B cell (primary cell): ENCODE measurements at regions of chr1 and their contacts with region 1.

Region 1: DNA sequence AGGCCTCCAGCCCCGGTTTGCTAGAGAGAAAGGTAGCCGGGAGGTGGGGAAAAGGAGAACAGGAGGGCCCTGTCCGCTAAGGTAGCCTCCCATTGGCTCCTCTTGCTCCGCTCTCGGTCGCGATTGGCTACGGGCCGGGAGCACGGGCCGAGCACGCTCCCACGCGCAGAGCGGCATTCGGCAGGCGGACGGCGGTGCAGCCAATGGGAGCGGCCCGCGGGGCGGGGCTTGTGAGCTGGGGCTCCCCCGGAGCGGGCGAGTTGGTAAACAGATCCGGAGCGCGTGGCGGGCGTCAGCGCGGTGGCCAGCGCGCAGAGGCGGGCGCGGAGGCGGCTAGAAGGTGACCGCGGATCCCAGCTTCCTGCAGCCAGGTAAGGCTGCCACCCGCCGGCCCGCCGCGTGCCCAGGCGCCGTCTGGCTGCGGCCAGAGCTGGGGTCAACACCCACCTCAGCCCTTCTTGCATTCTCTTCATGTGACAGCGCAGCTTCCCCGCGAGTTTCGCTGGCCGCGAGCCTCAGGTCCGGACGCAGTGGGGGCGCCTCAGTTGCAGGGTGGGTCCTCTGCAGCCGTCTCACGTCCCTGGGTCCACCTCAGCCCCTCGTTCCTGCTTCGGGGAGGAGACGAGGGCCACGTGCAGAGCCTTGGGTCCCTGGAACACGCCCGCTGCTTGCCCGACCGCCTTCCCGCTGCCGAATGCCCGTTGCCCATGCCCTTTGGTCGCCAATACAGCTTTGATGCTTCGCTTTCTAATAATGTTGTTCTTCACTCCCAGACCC is at the start of gene COQ8A:
- DNase-seq: peak; percentile 99
- ATAC-seq: peak; percentile 92
- H3K4me3 ChIP-seq: peak within 1 kb of the TSS; percentile 78 to 93 (median 90)
- H3K4me3 Mint-ChIP-seq: peak within 1 kb of the TSS; percentile 95
- H3K27ac ChIP-seq: peak within 1 kb of the TSS; percentile 86 to 94
- H3K27ac Mint-ChIP-seq: peak within 1 kb of the TSS; percentile 99
- H3K4me1 ChIP-seq: peaks cover 27 to 35% of the 10 kb centered on the region in 2 donors
- H3K4me1 Mint-ChIP-seq: peaks cover 60% of the 10 kb centered on the region
- H3K27me3 ChIP-seq: no peaks in the 10 kb centered on the region
- H3K27me3 Mint-ChIP-seq: no peaks in the 10 kb centered on the region
- CTCF ChIP-seq: no peak
- total RNA-seq, gene COQ8A: 48.7 and 58.2 TPM in 2 replicates

Region 2: GRCh38 chr1:226626577-226626956 is 313.6 kb before region 1 on chr1:
- CTCF ChIA-PET with region 1: no interaction called
- POLR2A ChIA-PET with region 1: no interaction called
- intact Hi-C with region 1: loop called (anchors 2 kb)
- DNase-seq: peak; percentile 85
- ATAC-seq: peak; percentile 97
- H3K4me3 ChIP-seq: peak overlapping the region in 4 of 5 experiments; percentile 9 to 46 (median 32)
- H3K4me3 Mint-ChIP-seq: peak overlapping the region; percentile 56
- H3K27ac ChIP-seq: no peak overlapping the region
- H3K27ac Mint-ChIP-seq: peak overlapping the region; percentile 21
- H3K4me1 ChIP-seq: peaks cover 20 to 21% of the 10 kb centered on the region in 2 donors
- H3K4me1 Mint-ChIP-seq: peaks cover 37% of the 10 kb centered on the region
- H3K27me3 ChIP-seq: no peaks in the 10 kb centered on the region
- H3K27me3 Mint-ChIP-seq: no peaks in the 10 kb centered on the region
- CTCF ChIP-seq: peak; percentile 95

Region 3: GRCh38 chr1:226870401-226871279 is 69.6 kb before region 1 on chr1 and contains the start of gene PSEN2:
- CTCF ChIA-PET with region 1: interaction called, 3 read pairs
- POLR2A ChIA-PET with region 1: interaction called, 4 read pairs
- intact Hi-C with region 1: loop called (anchors 1 kb)
- DNase-seq: peak; percentile 76
- ATAC-seq: peak; percentile 96
- H3K4me3 ChIP-seq: peak within 1 kb of the TSS in 4 of 5 experiments; percentile 50 to 85 (median 72)
- H3K4me3 Mint-ChIP-seq: peak within 1 kb of the TSS; percentile 88
- H3K27ac ChIP-seq: peak within 1 kb of the TSS in 1 of 2 donors; percentile 67
- H3K27ac Mint-ChIP-seq: peak within 1 kb of the TSS; percentile 67
- H3K4me1 ChIP-seq: peaks cover 10 to 16% of the 10 kb centered on the region in 2 donors
- H3K4me1 Mint-ChIP-seq: peaks cover 20% of the 10 kb centered on the region
- H3K27me3 ChIP-seq: peaks cover 0 to 3% (median 0%) of the 10 kb centered on the region in 4 experiments
- H3K27me3 Mint-ChIP-seq: no peaks in the 10 kb centered on the region
- CTCF ChIP-seq: no peak
- total RNA-seq, gene PSEN2: 26.0 and 29.9 TPM in 2 replicates

Region 4: DNA sequence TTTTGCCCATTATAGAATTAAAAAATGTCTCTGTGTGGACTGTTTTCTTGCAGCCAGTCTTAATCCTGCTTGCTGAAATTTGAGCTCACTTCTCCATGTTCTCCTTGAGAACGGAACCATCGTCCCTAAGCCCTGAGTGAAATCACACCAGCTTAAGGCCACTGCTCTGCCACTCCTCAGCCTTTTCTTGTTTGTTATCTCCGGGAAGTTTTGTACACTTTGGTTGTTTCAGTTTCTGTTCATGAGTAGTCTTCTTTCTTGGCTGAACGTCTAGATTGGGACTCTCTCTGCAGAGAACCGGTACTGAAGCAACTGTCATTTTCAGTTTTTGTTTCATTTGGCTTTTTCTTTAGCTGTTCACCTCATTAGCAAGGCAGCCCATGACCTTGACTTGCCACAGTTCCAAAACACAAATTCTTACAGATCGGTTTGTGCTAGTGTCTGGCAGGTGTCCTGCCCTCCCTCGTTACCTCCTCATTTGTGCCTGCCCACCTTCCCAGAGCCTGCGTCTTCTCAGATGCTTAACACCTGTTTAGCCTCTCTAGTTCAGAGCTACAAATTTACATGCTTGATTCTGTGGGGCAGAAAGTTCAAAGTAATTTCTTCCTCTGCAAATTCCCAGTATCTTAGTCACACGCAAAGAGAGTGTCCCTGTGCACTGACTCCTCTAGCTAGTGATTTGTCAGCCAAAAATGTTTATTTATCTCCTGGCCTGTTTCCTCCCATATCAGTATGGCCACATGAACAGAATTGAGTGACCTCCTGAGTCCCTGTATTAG is 57.4 kb before region 1 on chr1:
- CTCF ChIA-PET with region 1: interaction called, 3 read pairs
- POLR2A ChIA-PET with region 1: interaction called, 3 read pairs
- intact Hi-C with region 1: loop called (anchors 2 kb)
- DNase-seq: peak; percentile 74
- ATAC-seq: peak; percentile 92
- H3K4me3 ChIP-seq: peak overlapping the region in 4 of 5 experiments; percentile 16 to 58 (median 31)
- H3K4me3 Mint-ChIP-seq: peak overlapping the region; percentile 71
- H3K27ac ChIP-seq: peak overlapping the region; percentile 62 to 81
- H3K27ac Mint-ChIP-seq: peak overlapping the region; percentile 84
- H3K4me1 ChIP-seq: peaks cover 44 to 52% of the 10 kb centered on the region in 2 donors
- H3K4me1 Mint-ChIP-seq: peaks cover 46% of the 10 kb centered on the region
- H3K27me3 ChIP-seq: no peaks in the 10 kb centered on the region
- H3K27me3 Mint-ChIP-seq: no peaks in the 10 kb centered on the region
- CTCF ChIP-seq: no peak

Region 5: GRCh38 chr1:227844320-227845146 is 904.3 kb after region 1 on chr1:
- CTCF ChIA-PET with region 1: no interaction called
- POLR2A ChIA-PET with region 1: no interaction called
- intact Hi-C with region 1: no loop called
- DNase-seq: no peak
- ATAC-seq: no peak
- H3K4me3 ChIP-seq: no peak overlapping the region
- H3K4me3 Mint-ChIP-seq: no peak overlapping the region
- H3K27ac ChIP-seq: no peak overlapping the region
- H3K27ac Mint-ChIP-seq: peak overlapping the region; percentile 26
- H3K4me1 ChIP-seq: no peaks in the 10 kb centered on the region
- H3K4me1 Mint-ChIP-seq: no peaks in the 10 kb centered on the region
- H3K27me3 ChIP-seq: no peaks in the 10 kb centered on the region
- H3K27me3 Mint-ChIP-seq: no peaks in the 10 kb centered on the region
- CTCF ChIP-seq: no peak